ENCODE measurements at regions of chr12 and their contacts with region 1.

Region 1: DNA sequence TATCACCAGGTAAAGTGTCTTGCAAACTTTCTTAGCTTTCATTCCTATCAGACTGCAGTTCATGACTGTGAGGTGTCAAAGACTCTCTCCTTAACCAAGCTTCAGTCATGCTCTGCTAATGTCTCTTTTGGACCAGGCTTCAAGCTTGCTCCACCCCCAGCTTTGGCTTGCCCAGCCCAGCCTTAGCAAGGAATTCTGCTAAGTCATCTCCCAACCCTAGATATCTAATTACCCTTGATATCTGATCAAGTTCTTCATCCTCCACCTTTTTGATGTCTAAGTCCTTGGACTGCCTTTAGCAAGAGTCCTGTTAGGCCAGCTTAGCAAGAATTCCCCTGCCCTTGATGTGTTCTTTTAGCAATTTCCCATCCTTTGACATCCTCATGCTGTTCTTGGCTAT is 108.9 kb upstream of the FGD4 start:
- DNase-seq: no peak
- CTCF ChIP-seq: no peak

Region 2: DNA sequence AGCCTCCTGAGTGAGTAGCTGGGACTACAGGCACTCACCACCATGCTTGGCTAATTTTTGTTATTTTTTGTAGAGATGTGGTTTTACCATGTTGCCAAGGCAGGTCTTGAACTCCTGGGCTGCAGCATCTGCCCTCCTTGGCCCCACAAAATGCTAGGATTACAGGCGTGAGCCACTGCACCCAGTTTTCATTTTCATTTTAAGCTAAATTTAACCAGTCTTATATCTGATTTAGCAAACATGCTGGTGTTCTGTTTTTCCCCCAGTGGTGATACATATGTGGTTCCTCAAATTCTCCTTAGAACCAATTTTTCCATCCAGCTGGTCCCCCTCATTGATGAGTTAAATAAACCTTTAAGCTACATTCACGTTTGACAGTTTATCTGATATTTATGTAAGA is 227.5 kb before region 1 on chr12:
- in situ Hi-C with region 1: no loop called
- DNase-seq: no peak
- CTCF ChIP-seq: no peak

Region 3: DNA sequence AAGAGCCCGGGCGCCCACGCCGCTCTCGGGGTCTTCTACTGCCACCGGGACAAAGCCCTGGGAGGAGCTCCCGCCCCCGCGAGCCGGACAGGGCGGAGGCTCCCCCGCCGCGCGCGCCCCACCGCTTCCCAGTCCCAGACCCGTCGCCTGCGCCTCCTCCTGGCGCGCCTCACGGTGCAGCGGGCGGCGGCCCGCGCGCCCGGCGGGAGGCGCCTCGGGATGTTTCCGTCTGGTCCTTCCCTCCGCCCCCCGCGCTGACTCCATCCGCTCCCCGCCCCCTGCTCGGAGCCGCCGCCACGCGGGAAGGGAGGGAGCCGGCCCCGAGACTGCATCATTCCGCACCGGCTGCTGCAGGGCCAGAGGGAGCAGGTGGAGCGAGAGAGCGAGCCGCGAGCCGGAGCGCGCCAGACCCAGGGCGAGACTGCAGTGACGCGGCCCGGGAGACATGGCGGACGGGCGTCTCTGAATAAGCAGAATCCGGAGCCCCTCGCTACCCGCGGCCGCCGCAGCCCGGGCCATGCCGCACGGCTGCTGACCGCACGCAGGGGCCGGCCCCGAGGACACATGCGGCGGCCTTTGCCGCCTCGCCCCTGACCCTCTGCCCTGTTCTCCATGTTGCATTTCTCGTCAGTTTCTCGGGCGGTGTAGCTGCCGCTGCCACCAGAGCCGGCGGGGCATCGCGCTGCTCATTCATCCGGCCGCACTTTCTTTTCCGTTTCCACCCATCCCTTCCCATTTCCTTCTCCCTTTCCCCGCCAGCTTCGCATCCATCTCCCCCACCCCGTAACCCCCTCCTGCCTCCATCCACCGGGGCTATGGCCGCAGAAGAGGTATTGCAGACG is 183.7 kb before region 1 on chr12 and contains the start of gene BICD1:
- in situ Hi-C with region 1: loop called (anchors 25 kb)
- DNase-seq: peak; percentile 90
- CTCF ChIP-seq: peak; percentile 46